GM12878 (cell line): ENCODE measurements at regions of chr17 and their contacts with region 1.

Region 1: DNA sequence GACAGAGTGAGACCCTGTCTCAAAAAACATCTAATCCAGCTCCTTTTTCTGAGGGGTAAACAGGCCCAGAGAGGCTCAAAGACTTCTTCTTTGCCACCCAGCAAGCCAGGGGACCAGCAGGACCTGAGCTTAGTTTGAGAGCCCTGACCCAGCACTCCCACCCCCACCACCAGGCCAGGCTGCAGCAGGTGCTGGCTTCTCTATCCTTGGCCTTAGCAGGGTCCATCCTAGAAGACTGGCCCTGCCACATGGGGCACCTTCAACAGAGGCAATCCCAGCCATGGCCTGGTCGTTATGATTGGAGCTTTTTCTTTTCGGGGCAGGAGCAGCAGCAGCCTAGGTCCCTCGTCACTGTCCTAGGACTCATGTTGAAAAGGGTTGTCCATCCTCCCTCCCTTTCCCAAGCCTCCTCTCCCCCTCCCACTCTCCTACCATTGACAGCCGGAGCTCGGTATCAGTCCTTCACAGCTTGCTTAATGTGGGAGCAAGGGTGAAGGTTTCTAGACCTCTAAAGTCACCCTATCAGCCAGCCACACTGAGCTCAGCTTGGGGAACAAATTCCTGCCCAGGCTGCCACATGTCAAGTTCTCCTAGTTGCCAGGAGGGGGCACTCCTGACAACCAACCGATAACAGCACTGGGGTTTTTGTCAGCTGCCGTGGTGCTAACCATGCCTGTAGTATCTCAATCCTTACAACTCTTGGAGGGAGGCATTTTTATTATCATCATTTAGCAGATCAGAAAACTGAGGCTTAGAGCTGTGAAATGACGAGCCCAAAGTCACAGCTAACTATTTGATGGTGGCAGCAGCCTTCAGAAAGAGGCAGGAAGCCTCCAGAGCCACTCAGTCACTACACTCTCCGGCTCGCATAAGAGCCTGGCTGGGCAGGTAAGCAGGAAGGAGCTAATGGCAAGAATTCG is 11.2 kb downstream of the MRPL27 start:
- DNase-seq: no peak
- ATAC-seq: peak; percentile 94
- H3K4me3 ChIP-seq: no peak overlapping the region
- H3K27ac ChIP-seq: no peak overlapping the region
- H3K4me1 ChIP-seq: no peaks in the 10 kb centered on the region
- H3K27me3 ChIP-seq: no peaks in the 10 kb centered on the region
- CTCF ChIP-seq: peak; percentile 79 to 83 (median 80)
- EP300 ChIP-seq: no peak
- POLR2A ChIP-seq: 0 out of 2 replicates have a peak, but pooled peaks have one; percentile 28
- RAD21 ChIP-seq: peak; percentile 63

Region 2: GRCh38 chr17:49944273-49944890 is 417.4 kb before region 1 on chr17:
- CTCF ChIA-PET with region 1: no interaction called
- POLR2A ChIA-PET with region 1: no interaction called
- RAD21 ChIA-PET with region 1: no interaction called
- SMC1A ChIA-PET with region 1: no interaction called
- in situ Hi-C with region 1: no loop called
- intact Hi-C with region 1: no loop called
- DNase-seq: no peak
- ATAC-seq: no peak
- H3K4me3 ChIP-seq: no peak overlapping the region
- H3K27ac ChIP-seq: no peak overlapping the region
- H3K4me1 ChIP-seq: no peaks in the 10 kb centered on the region
- H3K27me3 ChIP-seq: peaks cover 2 to 11% of the 10 kb centered on the region in 2 experiments; a peak in 3 of 4 replicates
- CTCF ChIP-seq: no peak
- EP300 ChIP-seq: no peak
- POLR2A ChIP-seq: no peak
- RAD21 ChIP-seq: no peak

Region 3: GRCh38 chr17:50345432-50346312 is 16.1 kb before region 1 on chr17 and contains the start of gene XYLT2:
- CTCF ChIA-PET with region 1: interaction called, 68 read pairs
- POLR2A ChIA-PET with region 1: interaction called, 5 read pairs
- RAD21 ChIA-PET with region 1: interaction called, 6 read pairs
- SMC1A ChIA-PET with region 1: interaction called, 17 read pairs
- in situ Hi-C with region 1: no loop called
- intact Hi-C with region 1: no loop called
- DNase-seq: no peak
- ATAC-seq: peak; percentile 90
- H3K4me3 ChIP-seq: peak within 1 kb of the TSS; percentile 85
- H3K27ac ChIP-seq: peak within 1 kb of the TSS; percentile 59
- H3K4me1 ChIP-seq: peaks cover 3% of the 10 kb centered on the region
- H3K27me3 ChIP-seq: no peaks in the 10 kb centered on the region
- CTCF ChIP-seq: no peak
- EP300 ChIP-seq: no peak
- POLR2A ChIP-seq: peak; percentile 99
- RAD21 ChIP-seq: no peak
- polyA plus RNA-seq, gene XYLT2: 0.82 to 1.5 TPM

Region 4: DNA sequence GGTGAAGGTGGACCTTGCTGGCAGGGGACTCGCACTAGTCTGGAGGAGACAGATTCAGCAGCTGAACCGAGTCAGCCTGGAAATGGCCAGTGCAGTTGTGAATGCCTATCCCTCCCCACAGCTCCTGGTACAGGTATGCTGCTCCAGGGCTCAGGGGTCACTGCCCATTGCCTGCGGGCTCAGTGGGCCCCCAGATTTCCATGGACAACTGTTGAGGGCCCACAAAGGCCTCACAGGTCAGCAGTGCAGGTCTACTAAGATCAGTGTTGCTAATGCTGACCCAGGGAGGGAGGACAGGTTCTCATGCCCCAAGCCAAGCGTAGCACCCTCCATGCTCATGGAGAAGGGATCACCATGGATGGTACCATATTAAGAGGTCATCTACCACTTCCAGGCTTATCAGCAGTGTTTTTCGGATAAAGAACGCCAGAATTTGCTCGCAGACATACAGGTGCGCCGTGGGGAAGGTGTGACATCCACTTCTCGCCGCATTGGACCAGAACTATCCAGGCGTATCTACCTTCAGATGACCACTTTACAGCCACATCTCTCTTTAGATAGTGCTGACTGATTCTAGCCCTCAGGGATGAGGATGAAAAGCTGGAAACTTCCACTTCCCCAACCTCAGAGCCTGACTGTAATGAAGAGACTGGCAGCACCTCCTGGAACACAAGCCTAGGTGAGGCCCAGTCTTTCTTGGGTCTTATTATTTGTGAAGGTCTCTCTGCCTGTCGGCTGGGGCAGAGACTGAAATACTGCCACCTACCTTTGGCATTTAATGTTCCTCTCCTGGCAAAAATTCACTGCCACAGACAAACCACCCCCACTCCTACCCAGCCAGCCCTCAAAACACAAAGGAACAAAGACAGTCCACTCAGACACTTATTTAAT is 18.8 kb after region 1 on chr17:
- CTCF ChIA-PET with region 1: interaction called, 48 read pairs
- POLR2A ChIA-PET with region 1: no interaction called
- RAD21 ChIA-PET with region 1: interaction called, 4 read pairs
- SMC1A ChIA-PET with region 1: interaction called, 6 read pairs
- in situ Hi-C with region 1: no loop called
- intact Hi-C with region 1: no loop called
- DNase-seq: no peak
- ATAC-seq: peak; percentile 36
- H3K4me3 ChIP-seq: no peak overlapping the region
- H3K27ac ChIP-seq: no peak overlapping the region
- H3K4me1 ChIP-seq: no peaks in the 10 kb centered on the region
- H3K27me3 ChIP-seq: no peaks in the 10 kb centered on the region
- CTCF ChIP-seq: 0 out of 6 replicates have a peak, but pooled peaks of 1 of the 3 experiments have one; percentile 8
- EP300 ChIP-seq: no peak
- POLR2A ChIP-seq: 0 out of 2 replicates have a peak, but pooled peaks have one; percentile 70
- RAD21 ChIP-seq: no peak

Region 5: GRCh38 chr17:50397111-50397918 is 35.5 kb after region 1 on chr17 and contains the start of gene LRRC59:
- CTCF ChIA-PET with region 1: interaction called, 83 read pairs
- POLR2A ChIA-PET with region 1: interaction called, 9 read pairs
- RAD21 ChIA-PET with region 1: interaction called, 32 read pairs
- SMC1A ChIA-PET with region 1: interaction called, 26 read pairs
- in situ Hi-C with region 1: no loop called
- intact Hi-C with region 1: no loop called
- DNase-seq: peak; percentile 55
- ATAC-seq: peak; percentile 97
- H3K4me3 ChIP-seq: peak within 1 kb of the TSS; percentile 93
- H3K27ac ChIP-seq: peak within 1 kb of the TSS; percentile 81
- H3K4me1 ChIP-seq: peaks cover 5% of the 10 kb centered on the region
- H3K27me3 ChIP-seq: no peaks in the 10 kb centered on the region
- CTCF ChIP-seq: peak; percentile 99; a peak in 5 of 6 replicates
- EP300 ChIP-seq: 0 out of 4 replicates have a peak, but pooled peaks of 1 of the 2 experiments have one; percentile 42
- POLR2A ChIP-seq: peak; percentile 100
- RAD21 ChIP-seq: peak; percentile 43
- polyA plus RNA-seq, gene LRRC59: 8.8 to 17.9 TPM

Region 6: DNA sequence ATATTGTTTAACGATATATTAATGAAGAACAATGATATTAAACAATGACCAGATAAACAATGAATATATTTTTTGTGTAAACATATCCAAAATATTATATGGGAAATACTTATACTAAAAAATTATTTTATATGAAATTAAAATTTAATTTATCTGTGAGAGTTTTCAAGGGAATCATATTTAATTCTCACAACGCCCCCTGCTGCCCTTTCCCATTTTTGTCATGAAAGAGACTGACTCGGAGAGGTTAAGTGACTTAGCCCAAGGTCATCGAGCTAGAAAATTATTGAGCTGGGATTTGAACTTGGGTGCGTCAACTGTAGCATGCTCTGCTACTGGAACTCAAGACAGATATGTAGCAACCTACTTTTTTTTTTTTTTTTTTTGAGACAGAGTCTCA is 139.2 kb after region 1 on chr17:
- CTCF ChIA-PET with region 1: interaction called, 10 read pairs
- POLR2A ChIA-PET with region 1: no interaction called
- RAD21 ChIA-PET with region 1: interaction called, 7 read pairs
- SMC1A ChIA-PET with region 1: interaction called, 3 read pairs
- in situ Hi-C with region 1: no loop called
- intact Hi-C with region 1: no loop called
- DNase-seq: no peak
- ATAC-seq: no peak
- H3K4me3 ChIP-seq: no peak overlapping the region
- H3K27ac ChIP-seq: no peak overlapping the region
- H3K4me1 ChIP-seq: no peaks in the 10 kb centered on the region
- H3K27me3 ChIP-seq: no peaks in the 10 kb centered on the region
- CTCF ChIP-seq: peak; percentile 27 to 45 (median 38); a peak in 5 of 6 replicates
- EP300 ChIP-seq: no peak
- POLR2A ChIP-seq: no peak
- RAD21 ChIP-seq: no peak